ENCODE measurements at regions of chr1 and their contacts with region 1.

Region 1: GRCh38 chr1:33367485-33368405 is 46.8 kb upstream of the A3GALT2 start:
- DNase-seq: peak; percentile 89 to 90
- H3K4me3 ChIP-seq: no peak overlapping the region
- H3K27ac ChIP-seq: peak overlapping the region; percentile 0 to 79
- H3K4me1 ChIP-seq: peaks cover 0 to 23% of the 10 kb centered on the region in 2 donors
- H3K27me3 ChIP-seq: no peaks in the 10 kb centered on the region
- CTCF ChIP-seq: peak; percentile 96 to 98 (median 98)
- POLR2A ChIP-seq: no peak

Region 2: DNA sequence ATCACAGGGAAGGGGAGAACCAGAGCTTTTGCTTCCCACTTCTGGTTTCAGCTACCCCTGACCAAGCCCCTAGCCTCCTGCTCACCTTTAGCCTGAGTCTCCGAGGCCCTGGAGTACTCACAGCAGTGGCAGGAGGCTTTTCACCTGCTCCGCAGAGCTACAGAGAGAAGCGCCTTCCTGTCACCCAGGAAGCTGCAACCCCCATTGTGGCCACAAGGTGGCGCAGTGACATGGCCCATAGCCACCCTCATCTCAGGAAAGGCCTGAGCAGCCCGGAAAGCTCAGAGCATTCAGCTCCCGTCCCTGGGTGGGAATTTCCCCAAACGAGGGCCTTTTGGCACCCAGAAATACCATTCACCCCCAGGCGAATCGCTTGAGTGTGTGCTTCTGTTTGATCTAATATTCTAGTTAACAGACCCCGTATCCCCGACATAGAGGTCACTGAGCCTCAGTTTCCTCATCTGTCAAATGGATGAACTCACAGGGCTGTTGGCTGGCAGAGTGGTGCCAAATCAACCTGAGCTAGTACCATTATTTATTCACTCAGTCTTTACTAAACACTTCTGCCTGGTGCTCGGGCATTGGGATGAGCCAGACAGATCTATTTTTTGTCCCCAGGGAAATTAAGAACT is 72.2 kb before region 1 on chr1:
- intact Hi-C with region 1: loop called (anchors 5 kb)
- DNase-seq: peak; percentile 87 to 88
- H3K4me3 ChIP-seq: no peak overlapping the region
- H3K27ac ChIP-seq: peak overlapping the region; percentile 16 to 20
- H3K4me1 ChIP-seq: peaks cover 0 to 2% of the 10 kb centered on the region in 2 donors
- H3K27me3 ChIP-seq: no peaks in the 10 kb centered on the region
- CTCF ChIP-seq: peak; percentile 94 to 99 (median 96)
- POLR2A ChIP-seq: no peak

Region 3: DNA sequence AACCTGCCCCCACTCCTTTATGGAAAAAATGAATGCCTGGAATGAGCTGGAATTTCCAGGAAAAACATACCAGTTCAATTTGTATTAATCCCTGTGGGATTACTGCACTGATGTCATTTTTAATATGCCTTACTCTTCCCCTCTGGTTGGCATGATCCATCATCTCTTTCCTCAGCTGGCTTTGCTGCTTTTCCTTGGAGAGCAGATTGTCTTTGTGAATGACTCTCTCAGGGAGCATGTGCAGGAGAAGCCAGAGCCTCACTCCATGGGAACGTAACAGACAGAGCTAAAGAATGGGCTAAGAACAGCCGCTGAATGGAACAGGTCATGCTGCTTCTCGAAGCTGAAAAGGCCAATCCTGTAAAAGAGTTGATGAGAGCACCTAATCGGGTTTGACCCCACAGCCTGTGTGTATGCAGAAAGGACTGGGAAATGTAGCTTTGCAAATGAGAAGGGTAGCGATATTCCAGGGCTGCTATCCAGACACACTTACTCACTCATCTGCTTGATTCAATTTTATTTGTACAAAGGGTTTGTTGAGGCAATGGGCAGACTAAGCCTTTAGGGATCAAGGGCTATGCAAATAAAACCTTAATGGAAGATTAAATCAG is 42.5 kb after region 1 on chr1:
- intact Hi-C with region 1: no loop called
- DNase-seq: no peak
- H3K4me3 ChIP-seq: no peak overlapping the region
- H3K27ac ChIP-seq: no peak overlapping the region
- H3K4me1 ChIP-seq: no peaks in the 10 kb centered on the region
- H3K27me3 ChIP-seq: no peaks in the 10 kb centered on the region
- CTCF ChIP-seq: no peak
- POLR2A ChIP-seq: no peak

Region 4: GRCh38 chr1:33472349-33472980 is 104.7 kb after region 1 on chr1 and contains the start of gene ZSCAN20:
- intact Hi-C with region 1: loop called (anchors 5 kb)
- DNase-seq: peak; percentile 98 to 99
- H3K4me3 ChIP-seq: peak within 1 kb of the TSS; percentile 58 to 61
- H3K27ac ChIP-seq: peak within 1 kb of the TSS; percentile 77 to 87
- H3K4me1 ChIP-seq: no peaks in the 10 kb centered on the region
- H3K27me3 ChIP-seq: no peaks in the 10 kb centered on the region
- CTCF ChIP-seq: peak in 2 of 4 experiments; percentile 5 to 6
- POLR2A ChIP-seq: peak in 1 of 2 donors; percentile 31
- total RNA-seq, gene ZSCAN20: 2.4 to 16.0 (median 5.2) TPM